ENCODE measurements at regions of chr2 and their contacts with region 1.

Region 1: GRCh38 chr2:121356058-121356640 is 71.1 kb upstream of the TFCP2L1 start:
- DNase-seq: peak; percentile 74
- H3K4me3 ChIP-seq: no peak overlapping the region
- H3K27ac ChIP-seq: no peak overlapping the region
- H3K4me1 ChIP-seq: peaks cover 16% of the 10 kb centered on the region
- H3K27me3 ChIP-seq: no peaks in the 10 kb centered on the region
- CTCF ChIP-seq: peak; percentile 73 to 76
- POLR2A ChIP-seq: no peak

Region 2: DNA sequence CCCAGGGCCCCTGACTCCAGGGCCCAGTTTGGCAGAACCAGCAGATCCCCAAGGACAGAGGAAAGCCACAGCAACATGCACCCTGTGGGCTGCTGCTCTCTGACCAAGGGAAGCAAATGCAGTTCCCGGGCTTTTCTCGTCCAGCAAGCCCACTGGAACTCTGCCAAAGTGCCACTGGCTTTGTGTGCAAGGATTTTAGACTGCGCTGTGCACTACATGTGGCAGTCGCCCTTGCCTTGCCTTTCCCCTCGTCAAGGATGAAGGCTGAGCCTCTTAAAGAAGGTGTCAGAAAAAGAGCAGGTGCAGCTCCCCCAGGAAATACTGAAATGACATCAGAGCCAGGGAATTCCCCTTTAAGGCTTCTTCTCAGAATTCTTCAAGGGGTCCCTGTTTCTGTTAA is 270.3 kb before region 1 on chr2:
- CTCF ChIA-PET with region 1: interaction called, 24 read pairs
- POLR2A ChIA-PET with region 1: no interaction called
- dilution Hi-C with region 1: no loop called
- intact Hi-C with region 1: no loop called
- DNase-seq: no peak
- H3K4me3 ChIP-seq: no peak overlapping the region
- H3K27ac ChIP-seq: no peak overlapping the region
- H3K4me1 ChIP-seq: no peaks in the 10 kb centered on the region
- H3K27me3 ChIP-seq: peaks cover 0 to 3% of the 10 kb centered on the region in 2 experiments
- CTCF ChIP-seq: no peak
- POLR2A ChIP-seq: no peak

Region 3: GRCh38 chr2:121128754-121129659 is 227.1 kb before region 1 on chr2:
- CTCF ChIA-PET with region 1: interaction called, 56 read pairs
- POLR2A ChIA-PET with region 1: no interaction called
- dilution Hi-C with region 1: no loop called
- intact Hi-C with region 1: no loop called
- DNase-seq: peak; percentile 7
- H3K4me3 ChIP-seq: no peak overlapping the region
- H3K27ac ChIP-seq: no peak overlapping the region
- H3K4me1 ChIP-seq: no peaks in the 10 kb centered on the region
- H3K27me3 ChIP-seq: no peaks in the 10 kb centered on the region
- CTCF ChIP-seq: peak; percentile 35 to 58
- POLR2A ChIP-seq: no peak

Region 4: DNA sequence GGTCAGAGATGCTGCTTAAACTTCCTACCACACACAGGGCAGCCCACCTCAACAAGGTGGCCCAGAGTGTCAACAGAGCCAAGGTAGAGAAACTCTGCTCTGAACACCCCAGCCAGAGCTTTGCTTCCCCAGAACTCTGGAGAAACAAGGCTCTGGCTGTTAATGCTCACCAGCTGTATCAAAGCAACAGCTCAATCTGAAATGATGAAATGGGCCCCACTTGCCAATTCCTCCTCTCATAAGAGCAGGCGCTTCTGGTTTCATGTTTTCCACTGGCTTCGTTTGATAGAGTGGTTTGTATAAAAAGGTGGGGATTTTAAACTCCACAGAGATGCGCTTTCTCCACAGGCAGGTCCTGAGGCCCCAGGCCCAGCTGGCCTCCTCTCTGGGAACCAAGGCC is 10.3 kb before region 1 on chr2:
- CTCF ChIA-PET with region 1: interaction called, 39 read pairs
- POLR2A ChIA-PET with region 1: no interaction called
- dilution Hi-C with region 1: no loop called
- intact Hi-C with region 1: no loop called
- DNase-seq: no peak
- H3K4me3 ChIP-seq: no peak overlapping the region
- H3K27ac ChIP-seq: no peak overlapping the region
- H3K4me1 ChIP-seq: peaks cover 6% of the 10 kb centered on the region
- H3K27me3 ChIP-seq: no peaks in the 10 kb centered on the region
- CTCF ChIP-seq: no peak
- POLR2A ChIP-seq: no peak

Region 5: GRCh38 chr2:121367246-121367900 is 11.2 kb after region 1 on chr2:
- CTCF ChIA-PET with region 1: interaction called, 16 read pairs
- POLR2A ChIA-PET with region 1: no interaction called
- dilution Hi-C with region 1: no loop called
- intact Hi-C with region 1: no loop called
- DNase-seq: no peak
- H3K4me3 ChIP-seq: no peak overlapping the region
- H3K27ac ChIP-seq: no peak overlapping the region
- H3K4me1 ChIP-seq: peaks cover 21% of the 10 kb centered on the region
- H3K27me3 ChIP-seq: no peaks in the 10 kb centered on the region
- CTCF ChIP-seq: no peak
- POLR2A ChIP-seq: no peak

Measured in endothelial cell of umbilical vein (primary cell).